ENCODE measurements at regions of chr19 and their contacts with region 1.

Region 1: DNA sequence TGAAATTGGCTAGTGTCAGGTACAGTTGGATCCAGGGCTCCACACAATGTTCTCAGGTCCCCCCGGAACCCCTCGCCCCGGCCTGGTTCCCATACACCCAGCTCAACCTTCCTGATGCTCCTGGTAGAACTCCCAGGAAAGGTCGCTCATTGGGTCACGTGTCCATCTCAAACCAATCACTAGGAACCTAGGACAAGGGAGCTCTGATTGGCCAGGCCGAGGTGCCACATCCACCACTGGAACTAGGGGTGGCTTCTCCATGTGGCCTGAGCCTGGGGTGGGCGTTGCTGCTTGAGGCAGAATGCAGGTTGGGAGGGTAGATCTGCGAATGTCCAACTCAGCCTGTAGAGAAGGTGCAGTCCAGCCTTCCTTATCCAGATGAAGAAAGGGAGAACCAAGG is 6.9 kb upstream of the MEF2B start:
- DNase-seq: no peak
- H3K4me3 ChIP-seq: no peak overlapping the region
- H3K27ac ChIP-seq: no peak overlapping the region
- H3K4me1 ChIP-seq: no peaks in the 10 kb centered on the region; a peak in 1 of 4 replicates
- H3K27me3 ChIP-seq: no peaks in the 10 kb centered on the region
- CTCF ChIP-seq: no peak
- EP300 ChIP-seq: no peak
- RAD21 ChIP-seq: no peak

Region 2: GRCh38 chr19:19006213-19006612 is 170.7 kb before region 1 on chr19:
- CTCF ChIA-PET with region 1: no interaction called
- POLR2A ChIA-PET with region 1: no interaction called
- DNase-seq: no peak
- H3K4me3 ChIP-seq: no peak overlapping the region
- H3K27ac ChIP-seq: no peak overlapping the region
- H3K4me1 ChIP-seq: no peaks in the 10 kb centered on the region
- H3K27me3 ChIP-seq: no peaks in the 10 kb centered on the region
- CTCF ChIP-seq: no peak
- EP300 ChIP-seq: no peak
- RAD21 ChIP-seq: no peak

Region 3: GRCh38 chr19:19155495-19156219 is 21.3 kb before region 1 on chr19:
- CTCF ChIA-PET with region 1: interaction called, 99 read pairs
- POLR2A ChIA-PET with region 1: interaction called, 7 read pairs
- DNase-seq: no peak
- H3K4me3 ChIP-seq: no peak overlapping the region
- H3K27ac ChIP-seq: no peak overlapping the region
- H3K4me1 ChIP-seq: no peaks in the 10 kb centered on the region
- H3K27me3 ChIP-seq: no peaks in the 10 kb centered on the region
- CTCF ChIP-seq: no peak
- EP300 ChIP-seq: no peak
- RAD21 ChIP-seq: no peak

Region 4: GRCh38 chr19:19192078-19192882 is 15.3 kb after region 1 on chr19 and contains the starts of genes BORCS8 and RFXANK:
- CTCF ChIA-PET with region 1: interaction called, 27 read pairs
- POLR2A ChIA-PET with region 1: no interaction called
- DNase-seq: peak; percentile 98
- H3K4me3 ChIP-seq: peak within 1 kb of the TSS; percentile 69 to 91
- H3K27ac ChIP-seq: peak within 1 kb of the TSS; percentile 94 to 97
- H3K4me1 ChIP-seq: peaks cover 11 to 14% of the 10 kb centered on the region in 2 experiments; a peak in 2 of 4 replicates
- H3K27me3 ChIP-seq: no peaks in the 10 kb centered on the region
- CTCF ChIP-seq: no peak
- EP300 ChIP-seq: no peak
- RAD21 ChIP-seq: no peak
- polyA plus RNA-seq, gene BORCS8: 33.7 and 36.4 TPM in 2 replicates
- polyA plus RNA-seq, gene RFXANK: 98.2 and 117 TPM in 2 replicates